ENCODE measurements at regions of chr11 and their contacts with region 1.

Region 1: GRCh38 chr11:72683782-72684200 is 9.6 kb upstream of the PDE2A start:
- DNase-seq: peak; percentile 76 to 80
- H3K4me3 ChIP-seq: no peak overlapping the region
- H3K27ac ChIP-seq: no peak overlapping the region
- H3K4me1 ChIP-seq: peaks cover 0 to 7% (median 0%) of the 10 kb centered on the region in 4 donors
- H3K27me3 ChIP-seq: peaks cover 0 to 21% of the 10 kb centered on the region in 2 donors
- CTCF ChIP-seq: peak; percentile 96

Region 2: DNA sequence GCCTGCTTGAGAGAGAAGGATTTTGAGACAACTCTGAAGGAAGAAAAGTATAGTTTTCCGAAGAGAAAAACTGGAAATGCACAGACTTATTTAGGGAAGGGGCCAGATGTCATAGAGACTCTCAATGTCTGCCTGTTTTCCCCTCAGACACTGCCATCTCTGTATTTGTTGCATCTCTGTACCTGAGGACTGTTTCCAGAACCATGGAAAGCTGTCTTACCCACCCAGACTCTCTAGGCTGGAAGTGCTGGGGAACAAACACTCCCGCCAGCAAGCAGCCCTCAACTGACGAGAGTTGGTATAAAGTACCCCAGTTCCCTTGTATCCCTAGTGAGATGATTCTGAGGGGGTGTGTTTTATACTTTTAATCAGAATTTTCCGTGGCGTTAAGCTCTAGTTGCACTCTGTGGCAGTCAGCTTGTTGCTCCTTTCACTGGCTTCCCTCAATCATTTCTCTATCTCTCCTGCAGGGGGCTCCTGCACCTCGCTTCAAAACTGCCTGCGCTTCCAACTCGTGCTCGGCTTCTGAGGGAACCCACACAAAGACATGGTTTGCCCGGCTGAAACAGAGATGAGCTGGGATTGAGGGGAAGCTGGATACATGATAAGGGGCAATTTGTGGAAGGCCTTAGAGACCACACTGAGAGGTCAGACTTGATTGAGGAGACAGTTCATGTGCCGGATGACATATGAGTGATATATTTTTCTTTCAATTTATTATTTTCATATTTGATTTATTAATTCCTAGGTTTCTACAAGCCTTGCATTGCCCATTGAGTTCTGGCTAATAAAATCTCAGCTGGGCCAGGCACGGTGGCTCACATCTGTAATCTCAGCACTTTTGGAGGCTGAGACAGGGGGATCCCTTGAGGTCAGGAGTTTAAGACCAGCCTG is 212.5 kb before region 1 on chr11:
- intact Hi-C with region 1: loop called (anchors 5 kb)
- DNase-seq: peak; percentile 63 to 77
- H3K4me3 ChIP-seq: no peak overlapping the region
- H3K27ac ChIP-seq: no peak overlapping the region
- H3K4me1 ChIP-seq: peaks cover 0 to 10% (median 0%) of the 10 kb centered on the region in 4 donors
- H3K27me3 ChIP-seq: peaks cover 0 to 43% of the 10 kb centered on the region in 2 donors
- CTCF ChIP-seq: peak; percentile 76 to 77

Region 3: DNA sequence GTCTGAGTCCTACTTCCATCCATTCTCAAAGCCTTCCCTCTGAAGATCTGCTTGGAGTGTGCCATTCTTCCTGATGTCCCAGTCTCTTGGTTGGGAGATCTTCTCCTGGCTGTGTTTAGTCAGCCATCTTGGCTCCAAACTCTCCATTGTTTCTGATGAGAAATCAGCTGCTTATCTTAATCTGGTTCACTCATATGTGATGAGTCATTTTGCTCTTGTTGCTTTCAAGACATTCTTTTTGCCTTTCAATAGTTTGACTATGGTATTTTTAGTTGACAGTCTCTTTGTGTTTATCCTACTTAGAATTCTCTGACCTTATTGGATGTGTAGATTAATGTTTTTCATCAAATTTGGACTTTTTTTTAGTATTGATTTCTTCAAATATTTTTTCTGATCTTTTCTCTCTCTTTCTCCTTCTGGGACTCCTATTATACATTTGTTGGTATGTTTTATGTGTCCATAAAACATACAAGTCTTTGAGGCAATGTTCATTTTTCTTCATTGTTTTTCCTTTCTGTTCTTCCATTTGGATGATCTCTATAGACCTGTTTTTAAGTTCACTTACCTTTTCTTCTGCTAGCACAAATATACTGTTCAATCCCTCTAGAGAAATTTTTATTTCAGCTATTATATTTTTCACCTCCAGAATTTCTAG is 172.3 kb before region 1 on chr11:
- intact Hi-C with region 1: no loop called
- DNase-seq: no peak
- H3K4me3 ChIP-seq: no peak overlapping the region
- H3K27ac ChIP-seq: no peak overlapping the region
- H3K4me1 ChIP-seq: no peaks in the 10 kb centered on the region
- H3K27me3 ChIP-seq: peaks cover 0 to 3% of the 10 kb centered on the region in 2 donors
- CTCF ChIP-seq: no peak

Region 4: GRCh38 chr11:72585762-72586311 is 98.0 kb before region 1 on chr11:
- intact Hi-C with region 1: loop called (anchors 1 kb)
- DNase-seq: peak; percentile 52 to 77
- H3K4me3 ChIP-seq: no peak overlapping the region
- H3K27ac ChIP-seq: no peak overlapping the region
- H3K4me1 ChIP-seq: peaks cover 0 to 22% (median 15%) of the 10 kb centered on the region in 4 donors
- H3K27me3 ChIP-seq: peaks cover 0 to 59% of the 10 kb centered on the region in 2 donors
- CTCF ChIP-seq: peak; percentile 94 to 96